H1 (cell line): ENCODE measurements at regions of chr12 and their contacts with region 1.

Region 1: GRCh38 chr12:9149372-9149771 is 33.7 kb upstream of the A2M start:
- DNase-seq: peak in 1 of 2 experiments; percentile 46
- H3K4me3 ChIP-seq: no peak overlapping the region
- H3K27ac ChIP-seq: no peak overlapping the region
- H3K4me1 ChIP-seq: peaks cover 0 to 2% (median 0%) of the 10 kb centered on the region in 4 experiments; a peak in 1 of 7 replicates
- H3K27me3 ChIP-seq: no peaks in the 10 kb centered on the region
- CTCF ChIP-seq: peak; percentile 3 to 78 (median 67)
- EP300 ChIP-seq: no peak
- POLR2A ChIP-seq: no peak
- RAD21 ChIP-seq: peak; percentile 63 to 74

Region 2: DNA sequence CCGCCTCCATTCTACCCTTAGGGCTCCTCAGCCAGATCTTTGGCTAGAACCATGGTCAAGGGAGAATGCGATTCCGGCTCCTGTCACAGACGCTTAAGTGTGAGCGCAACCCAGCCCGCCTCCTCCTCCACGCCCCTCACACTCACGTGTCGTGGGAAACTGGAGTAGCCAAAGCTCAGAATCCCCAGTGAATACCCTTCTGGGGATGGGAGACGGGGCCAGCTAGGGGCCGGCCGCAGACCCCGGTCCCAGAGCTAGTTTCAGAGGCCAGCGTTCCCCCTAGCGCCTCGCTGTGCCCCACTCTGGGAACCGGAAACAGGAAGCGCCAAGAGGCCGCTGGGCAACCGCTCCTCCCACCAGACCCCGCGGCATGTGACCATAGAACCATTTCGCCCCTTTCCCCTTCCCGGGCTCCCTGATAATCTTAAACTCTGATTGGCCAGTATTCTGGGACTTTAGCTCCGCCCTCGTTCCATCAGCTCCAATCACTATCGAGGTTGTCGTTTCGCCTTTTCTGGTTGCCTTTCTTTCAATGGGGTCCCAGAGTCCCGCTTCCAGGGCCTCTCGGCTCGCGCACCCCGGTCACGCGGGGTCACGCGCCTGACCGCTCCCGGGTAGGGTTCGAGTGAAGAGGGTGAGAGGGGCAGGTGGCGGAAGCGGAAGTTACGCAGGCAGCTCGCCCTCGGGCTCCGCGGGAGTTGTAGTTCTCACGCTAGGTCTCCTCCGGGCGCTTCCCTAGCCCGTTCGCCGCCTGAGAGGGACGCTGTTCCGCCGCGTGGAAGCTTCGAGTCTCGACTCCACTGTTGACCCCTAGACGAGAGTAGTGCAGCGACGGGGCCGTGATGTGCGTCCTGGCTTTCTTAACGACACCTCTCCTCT is 199.8 kb before region 1 on chr12 and contains the start of gene M6PR:
- CTCF ChIA-PET with region 1: no interaction called
- POLR2A ChIA-PET with region 1: no interaction called
- DNase-seq: peak; percentile 79 to 94
- H3K4me3 ChIP-seq: peak within 1 kb of the TSS; percentile 61 to 93 (median 90)
- H3K27ac ChIP-seq: peak within 1 kb of the TSS; percentile 97
- H3K4me1 ChIP-seq: no peaks in the 10 kb centered on the region; a peak in 1 of 7 replicates
- H3K27me3 ChIP-seq: no peaks in the 10 kb centered on the region
- CTCF ChIP-seq: peak; percentile 66 to 68 (median 66)
- EP300 ChIP-seq: 0 out of 3 replicates have a peak, but pooled peaks of 1 of the 2 experiments have one; percentile 6
- POLR2A ChIP-seq: peak; percentile 54 to 84
- RAD21 ChIP-seq: peak; percentile 64 to 75
- total RNA-seq, gene M6PR: 106 and 115 TPM in 2 replicates

Region 3: DNA sequence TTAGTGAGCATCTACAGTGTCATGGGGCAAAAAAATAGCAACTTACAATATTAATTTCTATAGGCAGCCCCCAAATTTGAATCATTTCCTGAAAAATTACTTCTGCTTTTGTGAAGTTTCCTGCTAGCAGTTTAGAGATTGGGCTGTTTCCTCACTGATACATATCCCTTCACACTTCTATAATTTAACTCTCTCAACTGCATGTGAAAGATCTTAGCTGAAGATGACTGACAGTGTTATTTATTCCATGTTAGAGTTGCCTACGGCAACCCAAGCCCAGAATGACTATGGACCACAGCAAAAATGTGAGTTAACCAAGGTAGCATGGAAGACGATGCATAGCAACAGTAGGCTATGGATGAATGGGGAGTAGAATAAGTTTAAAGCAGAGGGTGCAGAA is 160.0 kb before region 1 on chr12 and contains the start of gene KLRG1:
- CTCF ChIA-PET with region 1: no interaction called
- POLR2A ChIA-PET with region 1: no interaction called
- DNase-seq: no peak
- H3K4me3 ChIP-seq: no peak within 1 kb of the TSS
- H3K27ac ChIP-seq: no peak within 1 kb of the TSS
- H3K4me1 ChIP-seq: no peaks in the 10 kb centered on the region
- H3K27me3 ChIP-seq: no peaks in the 10 kb centered on the region
- CTCF ChIP-seq: no peak
- EP300 ChIP-seq: no peak
- POLR2A ChIP-seq: no peak
- RAD21 ChIP-seq: no peak
- total RNA-seq, gene KLRG1: 7.9 and 9.1 TPM in 2 replicates

Region 4: DNA sequence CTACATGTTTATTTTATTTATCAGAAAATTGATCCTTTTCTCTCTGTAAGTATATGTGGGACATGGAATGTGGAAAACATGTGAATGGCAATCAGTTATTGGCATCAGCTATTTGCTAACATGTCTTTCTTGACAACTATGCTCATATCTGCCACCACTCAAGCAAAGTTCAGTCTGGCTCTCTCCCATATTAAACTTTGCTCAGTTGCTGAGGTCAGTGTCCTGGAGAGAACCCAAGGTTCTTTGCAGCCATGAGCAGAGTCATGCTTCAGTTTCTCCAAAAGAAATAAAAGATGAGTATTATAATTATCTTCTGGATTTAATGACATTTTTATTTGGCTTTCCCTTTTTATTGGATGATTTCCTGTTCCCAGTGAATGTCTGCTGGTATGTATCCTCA is 76.3 kb before region 1 on chr12:
- CTCF ChIA-PET with region 1: no interaction called
- POLR2A ChIA-PET with region 1: no interaction called
- DNase-seq: no peak
- H3K4me3 ChIP-seq: no peak overlapping the region
- H3K27ac ChIP-seq: no peak overlapping the region
- H3K4me1 ChIP-seq: no peaks in the 10 kb centered on the region
- H3K27me3 ChIP-seq: no peaks in the 10 kb centered on the region
- CTCF ChIP-seq: no peak
- EP300 ChIP-seq: no peak
- POLR2A ChIP-seq: no peak
- RAD21 ChIP-seq: no peak

Region 5: DNA sequence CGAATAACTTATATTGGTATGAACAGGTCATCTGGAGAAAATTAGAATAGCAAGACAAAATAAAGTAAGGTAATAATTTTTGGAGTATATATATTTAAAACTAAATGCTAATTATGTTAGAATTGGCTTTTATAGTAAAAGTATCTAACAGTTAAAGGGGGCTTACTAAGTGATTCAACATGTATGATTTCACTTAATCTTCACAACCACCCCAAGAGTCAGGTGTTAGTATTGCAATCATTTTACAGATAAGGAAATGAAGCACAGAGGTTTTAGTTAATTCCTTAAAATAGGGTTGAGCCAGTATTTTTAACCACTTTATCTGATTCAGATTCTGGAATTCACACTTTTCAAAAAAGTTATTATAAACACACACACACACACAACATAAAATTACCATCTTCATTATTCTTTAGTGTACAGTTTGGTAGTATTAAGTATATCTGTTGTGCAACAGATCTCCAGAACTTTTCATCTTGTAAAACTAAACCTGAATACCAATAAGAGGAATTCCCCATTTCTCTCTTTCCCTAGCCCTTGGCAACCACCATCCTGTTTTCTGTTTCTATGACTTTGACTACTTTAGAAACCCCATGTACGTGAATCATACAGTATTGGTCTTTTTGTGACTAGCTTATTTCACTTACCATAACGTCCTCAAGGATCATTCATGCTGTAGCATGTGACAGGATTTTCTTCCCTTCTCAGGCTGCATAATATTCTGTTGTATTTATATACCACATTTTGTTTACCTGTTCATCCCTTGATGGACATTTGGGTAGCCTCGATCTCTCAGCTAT is 46.1 kb before region 1 on chr12:
- CTCF ChIA-PET with region 1: no interaction called
- POLR2A ChIA-PET with region 1: no interaction called
- DNase-seq: no peak
- H3K4me3 ChIP-seq: no peak overlapping the region
- H3K27ac ChIP-seq: no peak overlapping the region
- H3K4me1 ChIP-seq: no peaks in the 10 kb centered on the region
- H3K27me3 ChIP-seq: no peaks in the 10 kb centered on the region
- CTCF ChIP-seq: no peak
- EP300 ChIP-seq: no peak
- POLR2A ChIP-seq: no peak
- RAD21 ChIP-seq: no peak

Region 6: DNA sequence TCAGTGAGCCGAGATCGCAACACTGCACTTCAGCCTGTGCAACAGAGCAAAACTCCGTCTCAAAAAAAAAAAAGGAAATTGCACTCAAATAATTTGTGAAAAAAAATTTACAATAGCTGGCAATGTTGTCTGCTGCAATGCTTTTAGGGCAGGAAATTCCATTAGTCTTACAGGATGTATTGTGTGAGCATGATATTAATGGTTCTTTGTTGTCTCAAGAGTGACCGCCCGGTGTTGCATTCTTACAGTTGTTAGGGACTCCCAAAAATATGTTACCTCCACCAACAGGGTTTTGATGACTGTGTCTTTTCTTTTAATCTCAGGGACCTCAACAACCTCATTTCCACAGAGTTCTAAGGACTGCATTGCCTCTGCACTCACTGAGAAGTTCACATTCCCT is 14.0 kb after region 1 on chr12:
- CTCF ChIA-PET with region 1: interaction called, 44 read pairs
- POLR2A ChIA-PET with region 1: no interaction called
- DNase-seq: no peak
- H3K4me3 ChIP-seq: no peak overlapping the region
- H3K27ac ChIP-seq: no peak overlapping the region
- H3K4me1 ChIP-seq: peaks cover 0 to 2% (median 0%) of the 10 kb centered on the region in 4 experiments; a peak in 1 of 7 replicates
- H3K27me3 ChIP-seq: no peaks in the 10 kb centered on the region
- CTCF ChIP-seq: no peak
- EP300 ChIP-seq: no peak
- POLR2A ChIP-seq: no peak
- RAD21 ChIP-seq: no peak